ENCODE measurements at regions of chr7 and their contacts with region 1.

Region 1: GRCh38 chr7:129635300-129636029 is 23.9 kb downstream of the NRF1 start:
- DNase-seq: peak in 1 of 2 donors; percentile 71
- H3K4me3 ChIP-seq: no peak overlapping the region
- H3K27ac ChIP-seq: no peak overlapping the region
- H3K4me1 ChIP-seq: no peaks in the 10 kb centered on the region
- H3K27me3 ChIP-seq: no peaks in the 10 kb centered on the region
- CTCF ChIP-seq: peak; percentile 23 to 71 (median 66)

Region 2: GRCh38 chr7:129367700-129368388 is 267.6 kb before region 1 on chr7:
- intact Hi-C with region 1: loop called (anchors 5 kb)
- DNase-seq: peak; percentile 12 to 74
- H3K4me3 ChIP-seq: peak overlapping the region in 1 of 2 donors; percentile 33
- H3K27ac ChIP-seq: no peak overlapping the region
- H3K4me1 ChIP-seq: no peaks in the 10 kb centered on the region
- H3K27me3 ChIP-seq: no peaks in the 10 kb centered on the region
- CTCF ChIP-seq: peak; percentile 70 to 87 (median 81)